Head of caudate nucleus (tissue), 42 donors: ENCODE measurements at regions of chr14 and their contacts with region 1.

Region 1: GRCh38 chr14:57871459-57872080 is 5.7 kb upstream of the SLC35F4 start:
- DNase-seq: peak in 38 of 42 donors; percentile 16 to 72 (median 42)

Region 2: DNA sequence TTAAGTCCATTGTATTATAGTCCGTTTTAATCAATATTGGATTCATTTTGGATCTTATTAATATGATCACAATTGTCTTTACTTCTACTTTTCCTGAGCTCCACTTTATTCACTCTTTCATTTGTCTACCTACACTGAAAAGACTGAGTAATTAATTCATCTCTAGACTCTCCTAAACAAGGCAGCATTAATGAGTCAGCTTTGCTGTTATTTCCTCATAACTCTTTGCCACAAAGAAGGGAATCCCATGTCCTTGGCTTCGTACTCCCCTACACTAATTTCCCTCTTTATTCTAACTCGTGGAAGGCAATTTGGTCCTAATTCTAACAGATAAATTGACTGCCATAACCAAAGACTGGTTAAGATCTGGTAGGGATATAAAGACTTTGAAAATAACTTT is 188.5 kb after region 1 on chr14:
- intact Hi-C with region 1: loop called (anchors 10 kb)
- DNase-seq: no peak